CD4-positive, alpha-beta memory T cell (primary cell): ENCODE measurements at regions of chrX and their contacts with region 1.

Region 1: DNA sequence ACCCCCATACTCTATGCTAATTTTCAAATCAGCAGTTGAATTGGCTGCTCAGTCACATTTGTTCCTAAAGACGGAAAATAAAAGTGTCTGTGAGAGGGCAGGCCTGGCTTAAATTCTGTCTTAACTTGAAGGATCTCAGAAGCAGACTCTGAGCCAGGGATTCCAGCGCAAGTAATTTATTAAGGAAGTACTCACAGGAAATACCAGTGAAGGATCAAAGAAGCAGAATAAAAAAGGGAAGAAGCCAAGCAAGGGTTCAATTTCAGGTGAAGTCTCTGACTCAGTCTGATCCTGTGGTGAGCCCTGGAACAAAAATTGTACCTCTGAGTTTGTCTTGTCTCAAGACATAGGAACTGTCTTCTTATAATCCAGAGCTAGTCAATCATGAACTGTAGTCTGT is 52.2 kb downstream of the IL1RAPL1 start:
- DNase-seq: no peak
- H3K4me3 ChIP-seq: no peak overlapping the region
- H3K4me3 Mint-ChIP-seq: no peak overlapping the region
- H3K27ac ChIP-seq: no peak overlapping the region
- H3K27ac Mint-ChIP-seq: no peak overlapping the region
- H3K4me1 ChIP-seq: no peaks in the 10 kb centered on the region
- H3K4me1 Mint-ChIP-seq: no peaks in the 10 kb centered on the region
- H3K27me3 ChIP-seq: no peaks in the 10 kb centered on the region
- H3K27me3 Mint-ChIP-seq: no peaks in the 10 kb centered on the region

Region 2: GRCh38 chrX:27998666-27999065 is 640.8 kb before region 1 on chrX:
- CTCF ChIA-PET with region 1: no interaction called
- POLR2A ChIA-PET with region 1: no interaction called
- intact Hi-C with region 1: no loop called
- DNase-seq: no peak
- H3K4me3 ChIP-seq: no peak overlapping the region
- H3K4me3 Mint-ChIP-seq: no peak overlapping the region
- H3K27ac ChIP-seq: no peak overlapping the region
- H3K27ac Mint-ChIP-seq: no peak overlapping the region
- H3K4me1 ChIP-seq: no peaks in the 10 kb centered on the region
- H3K4me1 Mint-ChIP-seq: no peaks in the 10 kb centered on the region
- H3K27me3 ChIP-seq: no peaks in the 10 kb centered on the region
- H3K27me3 Mint-ChIP-seq: no peaks in the 10 kb centered on the region

Region 3: DNA sequence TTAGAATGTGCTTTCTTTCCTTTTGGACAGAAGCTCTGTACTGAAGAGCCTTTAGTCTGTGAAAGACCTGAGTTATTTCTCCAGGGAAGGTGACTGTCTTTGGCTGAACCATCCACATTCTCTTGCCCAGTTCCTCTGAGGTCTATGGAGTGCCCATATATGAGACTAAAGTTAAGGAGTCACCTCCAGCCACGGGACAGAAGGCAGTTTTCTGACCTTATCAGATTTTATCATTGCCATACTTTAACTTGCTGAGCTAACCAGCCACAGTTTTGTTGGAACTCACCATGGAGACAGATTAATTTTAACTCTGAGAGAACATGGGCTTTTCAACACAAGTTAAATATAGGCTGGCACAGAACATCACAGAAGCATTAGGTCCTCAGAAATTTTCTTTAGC is 25.9 kb before region 1 on chrX:
- CTCF ChIA-PET with region 1: no interaction called
- POLR2A ChIA-PET with region 1: no interaction called
- intact Hi-C with region 1: loop called (anchors 2 kb)
- DNase-seq: no peak
- H3K4me3 ChIP-seq: no peak overlapping the region
- H3K4me3 Mint-ChIP-seq: no peak overlapping the region
- H3K27ac ChIP-seq: no peak overlapping the region
- H3K27ac Mint-ChIP-seq: no peak overlapping the region
- H3K4me1 ChIP-seq: no peaks in the 10 kb centered on the region
- H3K4me1 Mint-ChIP-seq: no peaks in the 10 kb centered on the region
- H3K27me3 ChIP-seq: no peaks in the 10 kb centered on the region
- H3K27me3 Mint-ChIP-seq: no peaks in the 10 kb centered on the region

Region 4: DNA sequence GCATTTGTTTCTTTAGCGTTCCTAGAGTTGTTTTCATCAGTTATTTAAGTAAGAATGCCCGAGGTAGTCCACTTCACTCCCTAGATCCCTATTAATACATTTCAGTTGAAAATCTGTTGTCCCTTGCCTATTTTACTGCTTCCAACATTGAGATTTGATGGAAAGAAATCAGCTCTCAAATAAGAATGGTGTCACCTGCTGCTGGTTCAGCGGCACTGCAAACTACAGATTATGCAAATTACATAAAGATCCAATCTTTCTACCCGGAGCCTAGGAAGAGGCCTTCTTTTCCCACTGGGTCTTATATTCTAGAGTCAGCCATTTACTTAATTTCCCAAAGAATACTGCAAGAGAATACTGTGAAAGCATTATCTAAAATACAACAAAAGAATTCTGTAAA is 978.3 kb after region 1 on chrX:
- CTCF ChIA-PET with region 1: no interaction called
- POLR2A ChIA-PET with region 1: no interaction called
- intact Hi-C with region 1: no loop called
- DNase-seq: no peak
- H3K4me3 ChIP-seq: no peak overlapping the region
- H3K4me3 Mint-ChIP-seq: no peak overlapping the region
- H3K27ac ChIP-seq: no peak overlapping the region
- H3K27ac Mint-ChIP-seq: no peak overlapping the region
- H3K4me1 ChIP-seq: no peaks in the 10 kb centered on the region
- H3K4me1 Mint-ChIP-seq: no peaks in the 10 kb centered on the region
- H3K27me3 ChIP-seq: no peaks in the 10 kb centered on the region
- H3K27me3 Mint-ChIP-seq: no peaks in the 10 kb centered on the region